Activated B cell treated with CpG ODN at 0.5 μM for 24 hours (primary cell): ENCODE measurements at regions of chr13 and their contacts with region 1.

Region 1: GRCh38 chr13:106548064-106548696 is 12.7 kb upstream of the EFNB2 start:
- DNase-seq: no peak
- ATAC-seq: no peak
- H3K4me3 Mint-ChIP-seq: no peak overlapping the region
- H3K27ac Mint-ChIP-seq: no peak overlapping the region
- H3K4me1 Mint-ChIP-seq: peaks cover 5% of the 10 kb centered on the region
- H3K27me3 Mint-ChIP-seq: no peaks in the 10 kb centered on the region
- CTCF ChIP-seq: no peak

Region 2: DNA sequence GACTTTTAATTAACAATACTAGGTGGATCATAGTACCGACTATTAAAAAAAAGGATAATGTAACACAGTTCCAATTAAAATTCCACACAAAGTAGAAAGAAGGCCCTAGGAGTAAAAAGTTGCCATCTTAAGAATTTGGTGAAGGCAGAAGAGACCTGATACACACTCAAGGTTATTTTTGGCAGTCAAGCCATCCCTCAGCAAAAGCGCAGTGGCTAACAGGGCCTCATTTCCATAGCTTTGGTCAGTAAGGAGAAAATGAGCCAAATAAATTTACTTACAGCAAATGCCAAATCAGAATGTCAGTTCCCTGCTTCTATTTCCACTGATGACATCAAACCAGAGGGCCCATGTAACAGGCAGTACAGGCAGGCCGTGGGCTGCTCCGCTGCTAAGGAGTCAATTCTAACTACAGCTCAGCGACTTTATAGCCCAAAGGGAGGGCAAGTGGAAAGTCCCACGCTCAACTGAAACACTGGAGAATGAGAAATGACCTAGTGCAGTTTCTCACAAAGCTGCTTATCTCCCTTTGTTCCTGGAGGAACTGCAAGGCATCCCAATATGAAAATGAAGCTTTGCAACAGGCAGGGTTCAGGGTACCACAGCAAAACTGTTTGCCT is 13.5 kb after region 1 on chr13:
- CTCF ChIA-PET with region 1: no interaction called
- POLR2A ChIA-PET with region 1: no interaction called
- intact Hi-C with region 1: loop called (anchors 1 kb)
- DNase-seq: peak; percentile 20
- ATAC-seq: peak; percentile 94
- H3K4me3 Mint-ChIP-seq: peak overlapping the region; percentile 25
- H3K27ac Mint-ChIP-seq: peak overlapping the region; percentile 53
- H3K4me1 Mint-ChIP-seq: peaks cover 73% of the 10 kb centered on the region
- H3K27me3 Mint-ChIP-seq: no peaks in the 10 kb centered on the region
- CTCF ChIP-seq: no peak

Region 3: DNA sequence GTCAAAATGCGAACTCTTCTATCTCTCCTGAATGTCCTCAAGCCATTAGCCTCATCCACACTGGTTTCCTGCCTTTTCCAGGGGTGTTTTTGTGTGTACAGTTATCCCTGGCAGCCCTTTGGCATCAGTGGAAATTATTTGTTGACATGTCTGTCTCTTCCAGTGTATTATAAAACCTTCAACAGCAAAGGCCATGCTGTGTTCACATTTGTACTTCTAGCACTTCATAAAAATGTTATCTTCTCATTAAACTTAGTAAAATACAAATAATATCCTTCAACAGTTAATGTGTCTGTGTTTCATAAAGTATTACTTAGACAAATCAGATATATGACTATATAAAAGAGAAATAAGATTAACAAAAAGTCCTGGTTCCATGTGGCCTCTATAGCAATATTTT is 379.2 kb after region 1 on chr13:
- CTCF ChIA-PET with region 1: no interaction called
- POLR2A ChIA-PET with region 1: no interaction called
- intact Hi-C with region 1: no loop called
- DNase-seq: no peak
- ATAC-seq: no peak
- H3K4me3 Mint-ChIP-seq: no peak overlapping the region
- H3K27ac Mint-ChIP-seq: no peak overlapping the region
- H3K4me1 Mint-ChIP-seq: no peaks in the 10 kb centered on the region
- H3K27me3 Mint-ChIP-seq: peaks cover 12% of the 10 kb centered on the region
- CTCF ChIP-seq: no peak